ENCODE measurements at regions of chr5 and their contacts with region 1.

Region 1: DNA sequence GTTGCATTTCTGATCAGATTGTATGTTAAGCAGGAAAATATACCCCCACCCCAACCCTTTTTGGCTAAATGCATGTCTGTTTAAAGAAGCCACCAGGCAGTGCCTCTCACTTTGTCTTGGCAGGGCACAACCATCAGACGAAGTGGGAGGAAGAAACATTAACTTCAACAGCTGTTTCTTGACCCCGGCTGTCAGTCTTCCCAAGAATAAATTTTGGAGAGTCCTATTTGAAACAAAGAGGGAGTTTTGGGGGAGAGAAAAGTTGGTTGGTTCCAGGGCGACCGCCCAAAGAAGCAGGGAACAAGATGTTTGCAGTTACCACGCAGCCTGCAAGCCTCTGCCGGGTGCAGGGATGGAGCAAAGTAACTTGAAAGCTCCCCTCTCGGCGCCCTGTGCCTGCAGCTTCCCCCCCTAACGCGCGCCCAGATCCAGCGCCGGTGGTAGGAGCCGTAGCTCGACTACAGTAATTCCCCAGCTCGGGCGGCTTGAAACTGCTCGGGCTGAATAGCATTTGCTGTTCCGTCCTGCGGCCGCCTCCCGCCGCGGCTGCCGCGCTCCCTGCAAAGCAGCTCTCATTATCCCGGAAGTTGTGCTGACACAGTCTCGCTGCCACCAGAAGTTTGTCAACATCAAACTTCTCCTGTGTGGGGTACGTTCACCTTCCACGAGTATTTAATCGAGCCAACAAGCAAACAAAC is 100.7 kb upstream of the SSBP2 start:
- DNase-seq: peak; percentile 98
- H3K4me3 ChIP-seq: peak overlapping the region; percentile 82
- H3K27ac ChIP-seq: peak overlapping the region; percentile 92
- H3K4me1 ChIP-seq: peaks cover 62% of the 10 kb centered on the region
- CTCF ChIP-seq: no peak

Region 2: GRCh38 chr5:81301271-81302015 is 550.2 kb before region 1 on chr5 and contains the start of gene ZCCHC9:
- CTCF ChIA-PET with region 1: no interaction called
- POLR2A ChIA-PET with region 1: interaction called, 6 read pairs
- intact Hi-C with region 1: loop called (anchors 5 kb)
- DNase-seq: peak; percentile 96
- H3K4me3 ChIP-seq: peak within 1 kb of the TSS; percentile 77
- H3K27ac ChIP-seq: peak within 1 kb of the TSS; percentile 45
- H3K4me1 ChIP-seq: peaks cover 22% of the 10 kb centered on the region
- CTCF ChIP-seq: 0 out of 2 replicates have a peak, but pooled peaks have one; percentile 24
- total RNA-seq, gene ZCCHC9: 19.2 and 29.1 TPM in 2 replicates

Region 3: GRCh38 chr5:81506900-81507588 is 344.6 kb before region 1 on chr5:
- CTCF ChIA-PET with region 1: no interaction called
- POLR2A ChIA-PET with region 1: interaction called, 9 read pairs
- intact Hi-C with region 1: loop called (anchors 1 kb)
- DNase-seq: peak; percentile 92
- H3K4me3 ChIP-seq: no peak overlapping the region
- H3K27ac ChIP-seq: peak overlapping the region; percentile 40
- H3K4me1 ChIP-seq: peaks cover 37% of the 10 kb centered on the region
- CTCF ChIP-seq: peak; percentile 96

Region 4: GRCh38 chr5:81751009-81751835 is 100.4 kb before region 1 on chr5 and contains the start of gene SSBP2:
- CTCF ChIA-PET with region 1: interaction called, 6 read pairs
- POLR2A ChIA-PET with region 1: interaction called, 81 read pairs
- intact Hi-C with region 1: loop called (anchors 1 kb)
- DNase-seq: peak; percentile 98
- H3K4me3 ChIP-seq: peak within 1 kb of the TSS; percentile 91
- H3K27ac ChIP-seq: peak within 1 kb of the TSS; percentile 98
- H3K4me1 ChIP-seq: peaks cover 44% of the 10 kb centered on the region
- CTCF ChIP-seq: 0 out of 2 replicates have a peak, but pooled peaks have one; percentile 17
- total RNA-seq, gene SSBP2: 131 and 172 TPM in 2 replicates

Region 5: GRCh38 chr5:81787474-81788242 is 64.0 kb before region 1 on chr5:
- CTCF ChIA-PET with region 1: interaction called, 3 read pairs
- POLR2A ChIA-PET with region 1: interaction called, 47 read pairs
- intact Hi-C with region 1: loop called (anchors 1 kb)
- DNase-seq: peak; percentile 80
- H3K4me3 ChIP-seq: peak overlapping the region; percentile 20
- H3K27ac ChIP-seq: peak overlapping the region; percentile 26
- H3K4me1 ChIP-seq: peaks cover 22% of the 10 kb centered on the region
- CTCF ChIP-seq: no peak

Region 6: GRCh38 chr5:81819556-81820317 is 31.9 kb before region 1 on chr5:
- CTCF ChIA-PET with region 1: no interaction called
- POLR2A ChIA-PET with region 1: no interaction called
- intact Hi-C with region 1: no loop called
- DNase-seq: no peak
- H3K4me3 ChIP-seq: no peak overlapping the region
- H3K27ac ChIP-seq: no peak overlapping the region
- H3K4me1 ChIP-seq: no peaks in the 10 kb centered on the region
- CTCF ChIP-seq: no peak

Region 7: DNA sequence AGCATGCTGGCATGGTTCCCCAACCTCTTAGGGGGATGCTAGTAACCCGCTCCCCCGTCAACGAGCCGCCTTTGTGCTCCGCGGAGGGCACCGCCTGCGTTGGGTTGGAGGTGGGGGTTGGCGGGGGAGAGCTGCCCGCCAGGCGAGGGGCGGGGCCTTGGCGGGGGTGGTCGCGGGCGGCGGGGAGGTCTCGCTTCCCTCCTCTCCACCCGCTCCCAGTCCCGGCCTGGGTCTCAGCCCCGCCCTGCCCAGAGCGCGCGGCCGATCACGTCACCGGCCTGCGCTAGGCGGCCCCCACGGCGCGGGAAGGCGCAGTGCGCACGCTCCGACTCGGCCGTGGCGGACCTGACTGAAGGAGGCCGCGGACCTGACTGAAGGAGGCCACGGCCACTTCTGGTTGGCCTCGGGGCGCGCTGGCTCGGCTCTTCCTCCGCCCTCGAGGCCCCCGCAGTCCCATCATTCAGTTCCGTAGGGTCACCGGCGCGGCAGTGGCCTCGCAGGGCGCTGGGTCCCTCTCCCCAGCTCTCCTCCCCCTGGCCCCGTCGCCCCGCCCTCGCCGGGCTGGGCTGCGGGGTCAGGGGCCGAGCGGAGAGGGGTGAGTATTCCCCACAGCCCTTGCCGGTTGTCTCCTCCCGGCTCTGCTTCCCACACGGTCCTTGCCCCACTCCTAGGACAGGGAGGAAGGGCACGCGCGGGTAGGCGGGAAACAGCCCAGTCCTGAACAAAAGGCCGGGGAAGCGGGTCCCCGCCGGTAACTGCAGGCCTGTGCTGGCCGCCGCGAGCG is 120.3 kb after region 1 on chr5 and contains the start of gene ATG10:
- CTCF ChIA-PET with region 1: no interaction called
- POLR2A ChIA-PET with region 1: interaction called, 7 read pairs
- intact Hi-C with region 1: loop called (anchors 2 kb)
- DNase-seq: peak; percentile 92
- H3K4me3 ChIP-seq: peak within 1 kb of the TSS; percentile 85
- H3K27ac ChIP-seq: peak within 1 kb of the TSS; percentile 56
- H3K4me1 ChIP-seq: peaks cover 19% of the 10 kb centered on the region
- CTCF ChIP-seq: no peak
- total RNA-seq, gene ATG10: 5.4 and 11.8 TPM in 2 replicates

Region 8: GRCh38 chr5:82018462-82018861 is 166.8 kb after region 1 on chr5:
- CTCF ChIA-PET with region 1: no interaction called
- POLR2A ChIA-PET with region 1: no interaction called
- intact Hi-C with region 1: no loop called
- DNase-seq: no peak
- H3K4me3 ChIP-seq: no peak overlapping the region
- H3K27ac ChIP-seq: no peak overlapping the region
- H3K4me1 ChIP-seq: no peaks in the 10 kb centered on the region
- CTCF ChIP-seq: no peak

Region 9: GRCh38 chr5:82225525-82226172 is 374.0 kb after region 1 on chr5:
- CTCF ChIA-PET with region 1: no interaction called
- POLR2A ChIA-PET with region 1: no interaction called
- intact Hi-C with region 1: loop called (anchors 5 kb)
- DNase-seq: peak; percentile 65
- H3K4me3 ChIP-seq: no peak overlapping the region
- H3K27ac ChIP-seq: no peak overlapping the region
- H3K4me1 ChIP-seq: no peaks in the 10 kb centered on the region
- CTCF ChIP-seq: peak; percentile 95

Region 10: DNA sequence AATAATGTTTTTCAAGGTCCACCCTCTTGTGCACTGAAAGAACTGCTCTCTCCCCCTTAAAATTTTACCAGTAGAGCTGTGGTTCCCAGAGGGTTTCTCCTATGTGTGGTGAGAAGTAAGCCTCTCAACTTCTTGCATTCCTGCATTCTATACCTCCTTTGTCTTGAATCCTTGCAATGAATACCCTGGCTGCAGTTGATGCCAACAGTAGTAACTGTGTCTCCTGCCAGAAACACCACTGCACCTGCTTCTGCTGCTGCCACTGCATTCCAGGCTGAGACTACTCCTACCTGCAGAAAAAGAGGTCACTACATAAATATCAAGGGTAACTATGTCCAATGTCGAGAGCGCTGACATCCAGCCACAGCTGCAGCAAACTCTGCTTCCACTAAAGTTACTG is 1021.8 kb after region 1 on chr5:
- CTCF ChIA-PET with region 1: no interaction called
- POLR2A ChIA-PET with region 1: no interaction called
- intact Hi-C with region 1: no loop called
- DNase-seq: no peak
- H3K4me3 ChIP-seq: no peak overlapping the region
- H3K27ac ChIP-seq: no peak overlapping the region
- H3K4me1 ChIP-seq: no peaks in the 10 kb centered on the region
- CTCF ChIP-seq: no peak

Measured in OCI-LY7 (cell line).